ENCODE measurements at regions of chr19 and their contacts with region 1.

Region 1: GRCh38 chr19:48333467-48334384 is 8.4 kb downstream of the EMP3 start:
- DNase-seq: peak; percentile 96
- H3K4me3 ChIP-seq: peak overlapping the region; percentile 72
- H3K27ac ChIP-seq: peak overlapping the region; percentile 91
- H3K4me1 ChIP-seq: peaks cover 50% of the 10 kb centered on the region
- CTCF ChIP-seq: peak; percentile 86

Region 2: DNA sequence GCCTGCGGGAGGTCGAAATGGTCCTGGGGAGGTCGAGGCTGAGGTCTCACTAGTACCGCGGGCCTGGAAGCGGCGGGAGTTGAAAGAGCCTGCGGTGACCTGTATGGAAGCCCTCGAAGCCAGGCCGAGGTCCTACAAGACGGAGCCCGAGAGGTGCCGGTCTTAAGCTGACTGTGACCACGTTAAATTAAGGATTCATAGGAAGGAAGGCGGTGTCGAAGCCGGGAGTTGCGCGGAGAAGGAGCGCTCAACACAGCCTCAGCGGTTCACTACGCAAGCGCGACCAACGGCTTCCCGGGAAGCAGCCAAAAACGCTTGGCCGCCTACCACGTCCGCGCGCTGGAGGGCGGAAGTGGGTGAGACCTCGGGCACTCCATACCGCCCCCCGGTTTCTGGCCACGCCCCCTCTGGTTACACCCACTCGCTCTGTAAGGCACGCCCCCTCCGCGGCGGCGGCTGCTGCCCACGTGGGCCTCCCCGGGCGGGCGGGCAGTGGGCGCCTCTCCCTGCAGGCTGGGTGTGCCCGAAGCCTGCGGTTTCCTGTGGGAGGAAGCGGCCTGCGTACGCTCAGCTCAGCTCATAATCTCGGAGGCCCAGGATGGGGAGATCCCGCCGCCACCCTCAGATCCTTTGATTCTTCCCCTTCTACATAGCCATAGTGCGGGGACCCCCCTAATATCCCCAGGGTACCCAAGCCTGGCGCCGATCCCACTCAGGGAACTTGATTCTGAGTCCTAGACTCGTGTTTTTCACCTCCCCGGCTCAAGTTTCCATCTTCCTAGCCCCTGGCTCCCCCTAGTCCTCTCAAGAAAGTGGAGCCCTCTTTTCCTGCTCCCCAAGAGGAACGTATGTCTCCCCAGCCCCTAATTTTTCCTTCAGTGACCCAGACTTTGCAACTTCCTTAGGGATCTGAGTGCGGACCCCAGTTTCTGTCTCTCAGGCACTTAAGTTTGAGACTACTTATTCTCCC is 11.8 kb before region 1 on chr19:
- CTCF ChIA-PET with region 1: interaction called, 8 read pairs
- POLR2A ChIA-PET with region 1: interaction called, 44 read pairs
- intact Hi-C with region 1: loop called (anchors 1 kb)
- DNase-seq: peak; percentile 98
- H3K4me3 ChIP-seq: peak overlapping the region; percentile 70
- H3K27ac ChIP-seq: peak overlapping the region; percentile 90
- H3K4me1 ChIP-seq: peaks cover 44% of the 10 kb centered on the region
- CTCF ChIP-seq: no peak

Region 3: GRCh38 chr19:48363810-48364563 is 30.3 kb after region 1 on chr19 and contains the starts of genes SYNGR4 and TMEM143:
- CTCF ChIA-PET with region 1: no interaction called
- POLR2A ChIA-PET with region 1: interaction called, 16 read pairs
- intact Hi-C with region 1: no loop called
- DNase-seq: peak; percentile 100
- H3K4me3 ChIP-seq: peak within 1 kb of the TSS; percentile 81
- H3K27ac ChIP-seq: peak within 1 kb of the TSS; percentile 82
- H3K4me1 ChIP-seq: peaks cover 16% of the 10 kb centered on the region
- CTCF ChIP-seq: no peak
- total RNA-seq, gene SYNGR4: 0.38 and 0.51 TPM in 2 replicates
- total RNA-seq, gene TMEM143: 18.2 and 31.1 TPM in 2 replicates